ENCODE measurements at regions of chr4 and their contacts with region 1.

Region 1: GRCh38 chr4:26248647-26249046 is 72.2 kb upstream of the RBPJ start:
- DNase-seq: peak in 1 of 3 donors; percentile 63
- ATAC-seq: no peak
- H3K4me3 ChIP-seq: no peak overlapping the region
- H3K4me1 ChIP-seq: no peaks in the 10 kb centered on the region
- CTCF ChIP-seq: no peak

Region 2: GRCh38 chr4:26319467-26319948 is 70.9 kb after region 1 on chr4:
- intact Hi-C with region 1: loop called in 1 of 2 experiments (anchors 10 kb)
- DNase-seq: peak; percentile 99
- ATAC-seq: peak; percentile 89
- H3K4me3 ChIP-seq: peak overlapping the region; percentile 43
- H3K4me1 ChIP-seq: no peaks in the 10 kb centered on the region
- CTCF ChIP-seq: no peak

Measured in mucosa of descending colon (tissue), 3 donors.